Naive thymus-derived CD4-positive, alpha-beta T cell (primary cell): ENCODE measurements at regions of chr4 and their contacts with region 1.

Region 1: GRCh38 chr4:149980941-149981340 is 97.3 kb upstream of the DCLK2 start:
- DNase-seq: peak in 6 of 9 donors; percentile 25 to 33 (median 28)
- ATAC-seq: peak; percentile 57
- H3K4me3 ChIP-seq: no peak overlapping the region
- H3K4me3 Mint-ChIP-seq: no peak overlapping the region
- H3K27ac ChIP-seq: no peak overlapping the region
- H3K27ac Mint-ChIP-seq: no peak overlapping the region
- H3K4me1 ChIP-seq: no peaks in the 10 kb centered on the region
- H3K4me1 Mint-ChIP-seq: peaks cover 0 to 12% (median 0%) of the 10 kb centered on the region in 7 donors
- H3K27me3 ChIP-seq: no peaks in the 10 kb centered on the region
- H3K27me3 Mint-ChIP-seq: peaks cover 0 to 12% (median 8%) of the 10 kb centered on the region in 5 donors

Region 2: GRCh38 chr4:150209140-150209829 is 228.3 kb after region 1 on chr4:
- CTCF ChIA-PET with region 1: no interaction called
- POLR2A ChIA-PET with region 1: no interaction called
- intact Hi-C with region 1: loop called in 1 of 2 experiments (anchors 1 kb)
- DNase-seq: no peak
- ATAC-seq: no peak
- H3K4me3 ChIP-seq: no peak overlapping the region
- H3K4me3 Mint-ChIP-seq: no peak overlapping the region
- H3K27ac ChIP-seq: no peak overlapping the region
- H3K27ac Mint-ChIP-seq: no peak overlapping the region
- H3K4me1 ChIP-seq: no peaks in the 10 kb centered on the region
- H3K4me1 Mint-ChIP-seq: no peaks in the 10 kb centered on the region
- H3K27me3 ChIP-seq: no peaks in the 10 kb centered on the region
- H3K27me3 Mint-ChIP-seq: peaks cover 0 to 31% (median 15%) of the 10 kb centered on the region in 5 donors

Region 3: DNA sequence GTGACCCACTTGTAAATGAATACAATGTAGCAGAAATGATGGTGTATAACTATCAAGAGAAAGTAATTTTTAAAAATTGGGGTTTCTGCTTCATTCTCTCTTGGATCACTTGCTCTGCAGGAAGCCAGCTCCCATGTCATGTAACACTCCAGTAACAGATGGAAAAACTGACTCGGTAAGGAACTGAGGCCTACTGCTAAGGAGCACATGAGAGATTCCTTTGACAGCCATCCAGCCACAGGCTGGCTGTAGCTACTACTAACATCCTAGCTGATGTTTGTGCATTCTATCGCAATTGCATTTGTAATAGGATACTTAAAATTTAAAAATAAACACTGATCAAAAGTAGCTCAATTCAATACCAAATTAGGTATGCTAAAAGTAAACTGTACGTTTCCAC is 498.7 kb after region 1 on chr4:
- CTCF ChIA-PET with region 1: no interaction called
- POLR2A ChIA-PET with region 1: no interaction called
- intact Hi-C with region 1: no loop called
- DNase-seq: no peak
- ATAC-seq: no peak
- H3K4me3 ChIP-seq: no peak overlapping the region
- H3K4me3 Mint-ChIP-seq: no peak overlapping the region
- H3K27ac ChIP-seq: no peak overlapping the region
- H3K27ac Mint-ChIP-seq: no peak overlapping the region
- H3K4me1 ChIP-seq: no peaks in the 10 kb centered on the region
- H3K4me1 Mint-ChIP-seq: peaks cover 0 to 5% (median 0%) of the 10 kb centered on the region in 7 donors
- H3K27me3 ChIP-seq: no peaks in the 10 kb centered on the region
- H3K27me3 Mint-ChIP-seq: no peaks in the 10 kb centered on the region